ENCODE measurements at regions of chr2 and their contacts with region 1.

Region 1: GRCh38 chr2:48107326-48107925 is 201.1 kb upstream of the FBXO11 start:
- DNase-seq: peak; percentile 55
- ATAC-seq: no peak
- H3K4me3 ChIP-seq: peak overlapping the region in 1 of 2 experiments; percentile 37; a peak in 1 of 4 replicates
- H3K27ac ChIP-seq: peak overlapping the region; percentile 25; the same call in 1 of the 2 replicates
- H3K4me1 ChIP-seq: peaks cover 18 to 58% of the 10 kb centered on the region in 2 experiments
- H3K27me3 ChIP-seq: no peaks in the 10 kb centered on the region
- CTCF ChIP-seq: peak in 1 of 3 experiments; percentile 38; a peak in 3 of 6 replicates
- POLR2A ChIP-seq: no peak
- RAD21 ChIP-seq: no peak

Region 2: GRCh38 chr2:47344890-47345589 is 762.4 kb before region 1 on chr2:
- CTCF ChIA-PET with region 1: no interaction called
- POLR2A ChIA-PET with region 1: no interaction called
- RAD21 ChIA-PET with region 1: no interaction called
- intact Hi-C with region 1: loop called (anchors 5 kb)
- DNase-seq: peak; percentile 86
- ATAC-seq: peak; percentile 96
- H3K4me3 ChIP-seq: peak overlapping the region; percentile 44 to 56
- H3K27ac ChIP-seq: peak overlapping the region; percentile 86
- H3K4me1 ChIP-seq: peaks cover 51 to 66% of the 10 kb centered on the region in 2 experiments
- H3K27me3 ChIP-seq: no peaks in the 10 kb centered on the region
- CTCF ChIP-seq: peak in 1 of 3 experiments; percentile 27; a peak in 1 of 6 replicates
- POLR2A ChIP-seq: peak; percentile 50
- RAD21 ChIP-seq: no peak

Region 3: GRCh38 chr2:47437287-47437686 is 670.1 kb before region 1 on chr2:
- CTCF ChIA-PET with region 1: interaction called, 5 read pairs
- POLR2A ChIA-PET with region 1: no interaction called
- RAD21 ChIA-PET with region 1: no interaction called
- intact Hi-C with region 1: loop called (anchors 5 kb)
- DNase-seq: no peak
- ATAC-seq: no peak
- H3K4me3 ChIP-seq: no peak overlapping the region
- H3K27ac ChIP-seq: no peak overlapping the region
- H3K4me1 ChIP-seq: no peaks in the 10 kb centered on the region
- H3K27me3 ChIP-seq: no peaks in the 10 kb centered on the region
- CTCF ChIP-seq: peak; percentile 16 to 52 (median 20); a peak in 1 of 6 replicates
- POLR2A ChIP-seq: no peak
- RAD21 ChIP-seq: peak; percentile 67

Region 4: GRCh38 chr2:47534179-47534919 is 573.1 kb before region 1 on chr2:
- CTCF ChIA-PET with region 1: no interaction called
- POLR2A ChIA-PET with region 1: no interaction called
- RAD21 ChIA-PET with region 1: no interaction called
- intact Hi-C with region 1: no loop called
- DNase-seq: no peak
- ATAC-seq: peak; percentile 66
- H3K4me3 ChIP-seq: no peak overlapping the region
- H3K27ac ChIP-seq: no peak overlapping the region
- H3K4me1 ChIP-seq: peaks cover 3 to 24% of the 10 kb centered on the region in 2 experiments; a peak in 3 of 4 replicates
- H3K27me3 ChIP-seq: no peaks in the 10 kb centered on the region
- CTCF ChIP-seq: no peak
- POLR2A ChIP-seq: no peak
- RAD21 ChIP-seq: no peak

Region 5: GRCh38 chr2:47782671-47783485 is 324.5 kb before region 1 on chr2 and contains the start of gene MSH6:
- CTCF ChIA-PET with region 1: no interaction called
- POLR2A ChIA-PET with region 1: no interaction called
- RAD21 ChIA-PET with region 1: interaction called in 1 of 2 experiments, 3 read pairs
- intact Hi-C with region 1: loop called (anchors 5 kb)
- DNase-seq: peak; percentile 68
- ATAC-seq: peak; percentile 86
- H3K4me3 ChIP-seq: peak within 1 kb of the TSS; percentile 72 to 90
- H3K27ac ChIP-seq: peak within 1 kb of the TSS; percentile 97
- H3K4me1 ChIP-seq: peaks cover 6 to 25% of the 10 kb centered on the region in 2 experiments; a peak in 3 of 4 replicates
- H3K27me3 ChIP-seq: no peaks in the 10 kb centered on the region
- CTCF ChIP-seq: no peak
- POLR2A ChIP-seq: peak; percentile 40
- RAD21 ChIP-seq: no peak
- total RNA-seq, gene MSH6: 71.2 TPM

Region 6: DNA sequence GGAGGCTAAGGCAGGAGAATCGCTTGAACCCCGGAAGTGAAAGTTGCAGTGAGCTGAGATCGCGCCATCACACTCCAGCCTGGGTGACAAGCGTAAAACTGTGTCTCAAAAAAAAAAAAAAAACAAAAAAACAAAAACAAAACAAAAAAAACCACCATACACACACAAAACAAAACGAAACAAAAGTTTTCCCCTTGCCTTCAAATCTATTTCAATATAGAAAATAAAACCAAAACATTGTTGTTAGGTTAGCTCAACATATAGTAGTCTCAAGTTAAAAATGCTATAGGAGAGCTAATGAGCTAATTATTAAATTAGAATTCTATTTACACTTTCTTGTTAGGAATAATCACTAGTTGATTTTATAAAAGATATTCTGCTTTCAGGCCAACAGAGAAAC is 244.5 kb before region 1 on chr2:
- CTCF ChIA-PET with region 1: interaction called, 15 read pairs
- POLR2A ChIA-PET with region 1: interaction called, 4 read pairs
- RAD21 ChIA-PET with region 1: interaction called in 1 of 2 experiments, 3 read pairs
- intact Hi-C with region 1: no loop called
- DNase-seq: no peak
- ATAC-seq: no peak
- H3K4me3 ChIP-seq: no peak overlapping the region
- H3K27ac ChIP-seq: no peak overlapping the region
- H3K4me1 ChIP-seq: peaks cover 12 to 13% of the 10 kb centered on the region in 2 experiments
- H3K27me3 ChIP-seq: no peaks in the 10 kb centered on the region
- CTCF ChIP-seq: no peak
- POLR2A ChIP-seq: no peak
- RAD21 ChIP-seq: no peak

Region 7: GRCh38 chr2:47876912-47877311 is 230.5 kb before region 1 on chr2:
- CTCF ChIA-PET with region 1: no interaction called
- POLR2A ChIA-PET with region 1: no interaction called
- RAD21 ChIA-PET with region 1: no interaction called
- intact Hi-C with region 1: no loop called
- DNase-seq: no peak
- ATAC-seq: no peak
- H3K4me3 ChIP-seq: no peak overlapping the region
- H3K27ac ChIP-seq: no peak overlapping the region
- H3K4me1 ChIP-seq: peaks cover 0 to 8% of the 10 kb centered on the region in 2 experiments; a peak in 2 of 4 replicates
- H3K27me3 ChIP-seq: no peaks in the 10 kb centered on the region
- CTCF ChIP-seq: no peak
- POLR2A ChIP-seq: no peak
- RAD21 ChIP-seq: no peak

Region 8: DNA sequence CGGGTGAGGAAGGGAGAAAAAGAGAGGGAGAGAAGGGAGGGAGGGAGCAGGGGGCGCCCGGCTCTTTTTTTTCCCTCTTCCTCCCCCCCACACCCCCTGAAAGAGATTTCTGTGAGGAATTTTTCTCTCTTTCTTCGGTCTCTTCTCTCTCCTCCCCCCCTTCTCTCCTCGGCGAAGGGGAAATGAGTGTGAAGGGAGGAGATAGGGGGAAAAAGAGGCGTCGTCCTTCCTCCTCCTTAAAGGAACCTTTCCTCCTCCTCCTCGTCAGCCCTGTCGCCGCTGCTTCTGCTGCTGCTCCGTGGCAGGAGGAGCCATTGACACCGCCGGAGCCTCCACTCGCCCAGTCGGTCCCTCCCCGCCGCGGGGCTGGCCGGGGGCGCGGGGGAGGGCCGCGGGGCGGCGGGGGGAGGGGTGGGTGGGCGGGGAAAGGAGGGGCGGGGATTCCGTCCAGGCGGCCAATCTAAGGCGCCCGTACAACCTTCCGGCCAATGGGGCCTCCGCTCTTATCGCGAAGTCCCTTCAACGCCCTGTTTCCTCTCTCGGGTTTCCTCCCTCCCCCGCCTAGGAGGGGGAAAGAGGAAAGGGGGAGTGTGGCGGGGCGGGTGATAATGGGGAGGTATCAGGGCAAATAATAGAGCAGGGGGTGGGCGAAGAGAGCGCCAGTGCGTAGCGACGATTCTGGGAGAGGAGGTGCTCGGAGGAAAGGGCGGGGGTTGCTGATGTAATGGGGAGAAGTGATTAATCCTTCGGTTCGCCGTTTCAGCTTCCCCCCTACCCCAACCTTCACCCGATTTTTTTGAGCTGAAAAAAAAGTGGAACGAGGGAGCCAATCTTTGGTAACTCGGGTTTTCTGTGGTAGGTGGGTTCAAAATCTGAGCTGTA is 201.0 kb before region 1 on chr2 and contains the start of gene FBXO11:
- CTCF ChIA-PET with region 1: interaction called, 14 read pairs
- POLR2A ChIA-PET with region 1: interaction called, 8 read pairs
- RAD21 ChIA-PET with region 1: no interaction called
- intact Hi-C with region 1: loop called (anchors 2 kb)
- DNase-seq: peak; percentile 97
- ATAC-seq: peak; percentile 86
- H3K4me3 ChIP-seq: peak within 1 kb of the TSS; percentile 85 to 87
- H3K27ac ChIP-seq: peak within 1 kb of the TSS; percentile 86
- H3K4me1 ChIP-seq: peaks cover 10 to 21% of the 10 kb centered on the region in 2 experiments
- H3K27me3 ChIP-seq: no peaks in the 10 kb centered on the region
- CTCF ChIP-seq: peak in 2 of 3 experiments; percentile 63 to 65; a peak in 4 of 6 replicates
- POLR2A ChIP-seq: peak; percentile 81
- RAD21 ChIP-seq: no peak; the same call in 1 of the 2 replicates
- total RNA-seq, gene FBXO11: 60.2 TPM